Activated CD8-positive, alpha-beta memory T cell treated with anti-CD3 and anti-CD28 coated beads, Interleukin-2, amount 10 ng/mL, durations not matched to agents 7 days and 5 days (primary cell): ENCODE measurements at regions of chr12 and their contacts with region 1.

Region 1: DNA sequence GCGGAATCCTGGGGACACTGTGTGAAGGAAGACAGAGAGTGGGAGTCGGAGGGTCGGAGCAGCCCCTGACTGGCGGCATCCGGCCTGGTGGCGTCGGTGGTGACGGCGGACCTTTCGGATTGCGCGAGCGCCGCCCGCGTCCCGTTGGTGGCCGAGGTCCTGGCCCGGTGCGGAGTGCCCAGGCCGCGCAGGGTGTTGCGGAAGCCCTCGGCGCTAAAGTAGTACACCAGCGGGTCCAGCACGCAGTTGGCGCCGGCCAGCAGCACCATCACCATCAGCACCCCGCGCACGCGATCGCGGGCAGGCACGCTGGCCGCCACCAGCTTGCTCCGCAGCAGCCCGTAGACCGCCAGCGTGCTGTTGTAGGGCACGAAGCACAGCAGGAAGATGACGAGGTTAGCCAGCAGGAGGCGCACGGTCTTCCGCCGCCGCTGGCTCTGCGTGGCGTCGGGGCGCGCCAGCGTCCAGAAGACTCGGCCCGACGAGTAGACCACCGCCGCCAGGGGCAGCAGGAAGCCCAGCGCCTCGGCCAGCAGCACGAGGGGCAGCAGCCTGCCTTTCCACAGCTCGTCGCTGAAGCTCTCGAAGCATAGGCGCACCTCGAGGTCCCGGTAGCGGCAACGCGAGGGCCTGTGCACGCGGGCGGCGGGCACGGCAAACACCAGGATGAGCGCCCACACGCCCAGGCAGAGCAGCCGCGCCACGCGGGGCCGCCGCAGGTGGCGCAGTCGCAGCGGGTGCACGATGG is 13.1 kb upstream of the CHD4 start:
- DNase-seq: peak; percentile 55
- ATAC-seq: peak; percentile 75
- H3K4me3 Mint-ChIP-seq: peak overlapping the region; percentile 63
- H3K27ac Mint-ChIP-seq: no peak overlapping the region
- H3K4me1 Mint-ChIP-seq: peaks cover 14% of the 10 kb centered on the region
- H3K27me3 Mint-ChIP-seq: no peaks in the 10 kb centered on the region

Region 2: GRCh38 chr12:6632026-6632983 is 12.0 kb after region 1 on chr12:
- CTCF ChIA-PET with region 1: interaction called, 12 read pairs
- DNase-seq: peak; percentile 78
- ATAC-seq: peak; percentile 66
- H3K4me3 Mint-ChIP-seq: peak overlapping the region; percentile 80
- H3K27ac Mint-ChIP-seq: peak overlapping the region; percentile 99
- H3K4me1 Mint-ChIP-seq: peaks cover 60% of the 10 kb centered on the region
- H3K27me3 Mint-ChIP-seq: no peaks in the 10 kb centered on the region

Region 3: GRCh38 chr12:6644903-6645302 is 24.6 kb after region 1 on chr12:
- CTCF ChIA-PET with region 1: interaction called, 10 read pairs
- DNase-seq: no peak
- ATAC-seq: no peak
- H3K4me3 Mint-ChIP-seq: no peak overlapping the region
- H3K27ac Mint-ChIP-seq: no peak overlapping the region
- H3K4me1 Mint-ChIP-seq: peaks cover 8% of the 10 kb centered on the region
- H3K27me3 Mint-ChIP-seq: peaks cover 10% of the 10 kb centered on the region

Region 4: GRCh38 chr12:6688999-6689882 is 68.9 kb after region 1 on chr12 and contains the start of gene ZNF384:
- CTCF ChIA-PET with region 1: interaction called, 36 read pairs
- DNase-seq: peak; percentile 99
- ATAC-seq: peak; percentile 84
- H3K4me3 Mint-ChIP-seq: peak within 1 kb of the TSS; percentile 96
- H3K27ac Mint-ChIP-seq: peak within 1 kb of the TSS; percentile 96
- H3K4me1 Mint-ChIP-seq: peaks cover 44% of the 10 kb centered on the region
- H3K27me3 Mint-ChIP-seq: no peaks in the 10 kb centered on the region
- total RNA-seq, gene ZNF384: 76.3 to 76.4 TPM

Region 5: GRCh38 chr12:6904280-6905278 is 284.3 kb after region 1 on chr12 and contains the start of gene LRRC23:
- CTCF ChIA-PET with region 1: no interaction called
- DNase-seq: peak; percentile 99
- ATAC-seq: peak; percentile 98
- H3K4me3 Mint-ChIP-seq: no peak within 1 kb of the TSS
- H3K27ac Mint-ChIP-seq: no peak within 1 kb of the TSS
- H3K4me1 Mint-ChIP-seq: peaks cover 3% of the 10 kb centered on the region
- H3K27me3 Mint-ChIP-seq: no peaks in the 10 kb centered on the region
- total RNA-seq, gene LRRC23: 4.9 to 8.7 TPM